ENCODE measurements at regions of chr10 and their contacts with region 1.

Region 1: DNA sequence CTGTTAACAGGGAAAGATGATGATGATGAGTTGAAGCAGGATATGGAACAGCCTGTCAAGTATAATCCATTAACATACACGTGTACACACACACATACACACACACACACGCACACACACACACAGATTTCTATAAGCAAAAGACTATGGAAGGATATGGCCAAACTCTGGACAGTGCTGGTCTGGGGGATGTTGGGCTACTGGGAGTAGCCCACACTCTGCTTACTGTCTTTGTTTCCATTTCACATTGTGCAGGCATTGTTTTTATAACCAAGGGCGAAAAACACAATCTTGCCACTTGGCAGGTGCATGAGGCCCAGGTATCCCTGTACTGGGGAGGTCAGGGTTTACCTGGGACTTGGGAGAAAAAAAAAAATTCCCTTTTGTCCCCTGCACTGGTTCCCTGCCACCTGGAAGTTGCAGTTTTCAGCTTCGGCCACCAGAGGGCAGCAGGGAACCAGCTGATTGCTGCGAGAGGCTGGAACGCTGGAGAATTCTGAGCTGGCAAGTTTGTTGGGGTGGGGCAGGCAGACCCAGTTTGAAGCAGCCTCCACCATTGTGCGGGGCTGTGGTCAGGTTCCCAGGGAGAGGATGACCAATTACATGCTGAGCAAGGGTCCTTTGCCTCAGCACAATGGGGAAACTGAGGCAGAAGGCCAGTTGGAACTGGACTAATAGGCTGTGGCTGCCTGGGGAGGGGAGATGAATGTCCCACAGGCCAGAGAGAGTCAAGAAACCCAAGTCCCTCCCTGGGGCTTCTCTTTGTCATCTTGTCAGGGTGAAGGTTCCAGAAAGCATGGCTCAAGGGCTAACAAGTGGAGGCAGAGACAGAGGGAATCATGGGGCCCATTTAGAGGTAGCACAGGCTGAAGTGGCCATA is 27.3 kb downstream of the PPIF start:
- DNase-seq: peak; percentile 90
- ATAC-seq: peak; percentile 86
- H3K4me3 Mint-ChIP-seq: no peak overlapping the region
- H3K27ac Mint-ChIP-seq: no peak overlapping the region
- H3K4me1 Mint-ChIP-seq: peaks cover 2% of the 10 kb centered on the region
- H3K27me3 Mint-ChIP-seq: peaks cover 3% of the 10 kb centered on the region
- CTCF ChIP-seq: peak; percentile 98

Region 2: DNA sequence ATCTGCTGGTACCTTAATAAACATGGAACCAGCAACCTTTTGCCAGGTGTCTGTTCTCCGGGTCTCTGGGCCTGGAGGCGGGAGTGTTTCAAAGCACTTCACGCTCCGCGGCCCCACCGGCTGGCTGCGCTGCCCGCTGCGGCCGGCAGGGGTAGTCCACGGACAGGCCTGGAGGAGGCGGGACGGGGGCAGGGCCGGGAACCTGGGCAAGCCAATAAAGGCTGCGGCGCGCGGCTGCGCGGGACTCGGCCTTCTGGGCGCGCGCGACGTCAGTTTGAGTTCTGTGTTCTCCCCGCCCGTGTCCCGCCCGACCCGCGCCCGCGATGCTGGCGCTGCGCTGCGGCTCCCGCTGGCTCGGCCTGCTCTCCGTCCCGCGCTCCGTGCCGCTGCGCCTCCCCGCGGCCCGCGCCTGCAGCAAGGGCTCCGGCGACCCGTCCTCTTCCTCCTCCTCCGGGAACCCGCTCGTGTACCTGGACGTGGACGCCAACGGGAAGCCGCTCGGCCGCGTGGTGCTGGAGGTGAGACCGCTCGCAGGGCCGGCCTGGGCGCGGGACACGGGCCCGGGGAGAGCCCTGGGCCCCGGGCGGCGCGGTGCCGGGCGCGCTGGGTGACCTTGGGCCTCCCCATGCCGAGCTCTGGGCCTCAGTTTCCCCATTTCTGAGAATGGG is 27.2 kb before region 1 on chr10 and contains the start of gene PPIF:
- CTCF ChIA-PET with region 1: interaction called, 12 read pairs
- POLR2A ChIA-PET with region 1: no interaction called
- DNase-seq: peak; percentile 96
- ATAC-seq: peak; percentile 88
- H3K4me3 Mint-ChIP-seq: peak within 1 kb of the TSS; percentile 65
- H3K27ac Mint-ChIP-seq: no peak within 1 kb of the TSS
- H3K4me1 Mint-ChIP-seq: peaks cover 8% of the 10 kb centered on the region
- H3K27me3 Mint-ChIP-seq: no peaks in the 10 kb centered on the region
- CTCF ChIP-seq: peak; percentile 95
- total RNA-seq, gene PPIF: 80.9 to 91.4 TPM (median 89.9 TPM) in 3 replicates

Region 3: GRCh38 chr10:79400146-79401004 is 25.8 kb after region 1 on chr10:
- CTCF ChIA-PET with region 1: interaction called, 19 read pairs
- POLR2A ChIA-PET with region 1: no interaction called
- DNase-seq: peak; percentile 71
- ATAC-seq: 0 out of 2 replicates have a peak, but pooled peaks have one; percentile 5
- H3K4me3 Mint-ChIP-seq: no peak overlapping the region
- H3K27ac Mint-ChIP-seq: no peak overlapping the region
- H3K4me1 Mint-ChIP-seq: peaks cover 44% of the 10 kb centered on the region
- H3K27me3 Mint-ChIP-seq: peaks cover 6% of the 10 kb centered on the region; the same call in 1 of the 2 replicates
- CTCF ChIP-seq: peak; percentile 84

Region 4: DNA sequence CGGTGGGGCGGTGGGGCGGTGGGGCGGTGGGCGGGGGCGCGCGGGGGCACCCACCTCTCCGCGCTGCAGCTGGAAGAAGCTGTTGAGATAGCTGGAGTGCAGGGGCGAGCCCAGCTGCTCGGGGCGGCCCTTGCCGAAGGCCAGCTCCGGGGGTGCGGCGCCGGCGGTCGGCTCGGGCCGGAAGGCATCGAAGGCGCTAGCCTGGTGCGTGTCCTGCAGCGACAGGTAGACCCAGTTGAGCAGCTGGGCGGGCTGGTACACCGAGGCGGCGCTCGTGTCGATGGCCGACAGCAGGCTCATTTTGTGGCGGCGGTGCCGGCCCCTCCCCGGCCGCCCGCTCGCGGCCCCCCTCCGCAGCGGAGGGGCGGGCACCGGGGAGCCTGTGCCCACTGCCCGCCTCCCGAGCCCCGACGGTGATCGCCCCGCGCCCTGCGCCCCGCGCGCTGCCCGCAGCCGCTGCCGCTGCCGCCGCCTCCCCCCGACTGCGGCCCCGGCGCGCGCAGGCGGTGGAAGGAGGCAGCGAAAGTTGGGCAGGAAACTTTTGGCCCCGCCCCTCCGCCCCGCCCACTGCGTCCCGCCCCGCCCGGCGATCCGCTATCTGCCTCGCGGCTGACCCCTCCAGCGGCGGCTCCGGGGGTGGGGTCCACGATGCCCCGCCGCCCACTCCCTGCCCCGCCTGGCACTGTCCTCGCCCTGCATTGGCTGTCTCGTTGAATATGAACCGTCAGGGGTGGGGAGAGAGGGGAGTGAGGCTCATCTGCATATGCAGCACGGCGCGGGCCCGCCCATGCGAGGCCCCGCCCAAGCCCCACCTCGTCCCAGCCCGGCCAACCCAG is 70.8 kb after region 1 on chr10 and contains the start of gene ZCCHC24:
- CTCF ChIA-PET with region 1: interaction called, 17 read pairs
- POLR2A ChIA-PET with region 1: no interaction called
- DNase-seq: peak; percentile 98
- ATAC-seq: peak; percentile 95
- H3K4me3 Mint-ChIP-seq: peak within 1 kb of the TSS; percentile 86
- H3K27ac Mint-ChIP-seq: peak within 1 kb of the TSS; percentile 98
- H3K4me1 Mint-ChIP-seq: peaks cover 31% of the 10 kb centered on the region
- H3K27me3 Mint-ChIP-seq: peaks cover 44% of the 10 kb centered on the region
- CTCF ChIP-seq: no peak
- total RNA-seq, gene ZCCHC24: 6.0 to 7.7 TPM (median 6.2 TPM) in 3 replicates

Region 5: DNA sequence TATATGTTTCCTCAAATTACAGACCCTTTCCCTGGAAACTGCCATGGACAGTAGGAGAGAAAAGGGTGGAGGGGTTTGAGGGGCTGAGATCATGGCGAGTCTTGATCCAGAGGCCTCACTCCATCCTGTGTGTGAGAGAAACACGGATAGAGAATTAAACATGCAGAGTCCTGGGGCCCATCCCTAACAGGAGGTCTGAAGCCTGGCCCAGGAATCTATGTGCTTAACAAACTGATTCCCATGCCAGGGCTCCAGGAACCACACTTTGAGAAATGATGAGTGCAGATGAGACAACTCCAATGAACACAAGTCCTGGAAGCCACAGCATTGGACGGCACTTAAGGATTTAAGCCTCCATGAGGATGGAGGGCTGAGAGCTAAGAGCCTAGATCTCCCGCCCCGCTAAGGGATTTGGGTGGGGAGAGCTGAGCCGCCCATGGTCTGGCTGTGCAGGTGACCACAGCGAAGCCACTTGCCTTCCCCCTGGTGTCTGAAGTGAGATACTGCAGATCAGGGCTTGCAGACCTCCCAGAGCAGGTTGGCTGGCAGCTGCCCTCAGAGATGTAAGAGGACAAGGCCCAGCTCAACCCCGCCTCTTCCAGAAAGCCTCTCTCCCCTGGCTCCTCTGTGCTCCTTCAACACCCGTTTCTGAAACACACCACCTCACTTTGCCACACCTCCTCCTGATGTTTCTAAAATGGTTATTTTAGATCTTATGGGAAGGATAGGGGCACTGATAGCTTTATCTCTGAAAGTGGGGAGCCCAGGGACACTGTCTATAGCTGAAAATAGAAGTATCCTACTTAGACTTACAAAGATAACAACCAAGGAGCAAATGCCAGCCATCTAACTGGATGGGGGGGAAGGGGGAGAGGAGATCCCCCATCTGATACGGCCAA is 113.0 kb after region 1 on chr10:
- CTCF ChIA-PET with region 1: interaction called, 120 read pairs
- POLR2A ChIA-PET with region 1: no interaction called
- DNase-seq: peak; percentile 86
- ATAC-seq: peak; percentile 97
- H3K4me3 Mint-ChIP-seq: no peak overlapping the region
- H3K27ac Mint-ChIP-seq: no peak overlapping the region
- H3K4me1 Mint-ChIP-seq: peaks cover 12% of the 10 kb centered on the region
- H3K27me3 Mint-ChIP-seq: no peaks in the 10 kb centered on the region; the same call in none of the 2 replicates
- CTCF ChIP-seq: peak; percentile 81

Region 6: GRCh38 chr10:79502561-79503309 is 128.2 kb after region 1 on chr10:
- CTCF ChIA-PET with region 1: interaction called, 20 read pairs
- POLR2A ChIA-PET with region 1: no interaction called
- DNase-seq: peak; percentile 75
- ATAC-seq: peak; percentile 99
- H3K4me3 Mint-ChIP-seq: peak overlapping the region; percentile 35; the same call in 1 of the 2 replicates
- H3K27ac Mint-ChIP-seq: no peak overlapping the region
- H3K4me1 Mint-ChIP-seq: peaks cover 5% of the 10 kb centered on the region
- H3K27me3 Mint-ChIP-seq: peaks cover 44% of the 10 kb centered on the region
- CTCF ChIP-seq: peak; percentile 52